AG04449 (cell line): ENCODE measurements at regions of chr17 and their contacts with region 1.

Region 1: GRCh38 chr17:13541032-13541480 is 60.7 kb downstream of the HS3ST3A1 start:
- DNase-seq: peak; percentile 95
- H3K4me3 ChIP-seq: no peak overlapping the region
- CTCF ChIP-seq: no peak

Region 2: GRCh38 chr17:13346996-13347765 is 193.9 kb before region 1 on chr17:
- CTCF ChIA-PET with region 1: interaction called, 3 read pairs
- POLR2A ChIA-PET with region 1: interaction called, 10 read pairs
- DNase-seq: peak; percentile 75
- H3K4me3 ChIP-seq: no peak overlapping the region
- CTCF ChIP-seq: no peak